Psoas muscle (tissue), 8 donors: ENCODE measurements at regions of chr16 and their contacts with region 1.

Region 1: GRCh38 chr16:11783319-11784037 is 13.6 kb downstream of the ZC3H7A start:
- DNase-seq: no peak
- ATAC-seq: peak in 3 of 4 donors; percentile 9 to 27 (median 16)
- H3K4me3 ChIP-seq: peak overlapping the region; percentile 33
- H3K27ac ChIP-seq: peak overlapping the region; percentile 74
- H3K4me1 ChIP-seq: peaks cover 44% of the 10 kb centered on the region
- H3K27me3 ChIP-seq: no peaks in the 10 kb centered on the region
- CTCF ChIP-seq: no peak

Region 2: GRCh38 chr16:11689031-11689761 is 94.3 kb before region 1 on chr16:
- intact Hi-C with region 1: no loop called
- DNase-seq: no peak
- ATAC-seq: peak in 1 of 4 donors; percentile 23
- H3K4me3 ChIP-seq: no peak overlapping the region
- H3K27ac ChIP-seq: peak overlapping the region; percentile 44
- H3K4me1 ChIP-seq: peaks cover 47% of the 10 kb centered on the region
- H3K27me3 ChIP-seq: no peaks in the 10 kb centered on the region
- CTCF ChIP-seq: no peak

Region 3: DNA sequence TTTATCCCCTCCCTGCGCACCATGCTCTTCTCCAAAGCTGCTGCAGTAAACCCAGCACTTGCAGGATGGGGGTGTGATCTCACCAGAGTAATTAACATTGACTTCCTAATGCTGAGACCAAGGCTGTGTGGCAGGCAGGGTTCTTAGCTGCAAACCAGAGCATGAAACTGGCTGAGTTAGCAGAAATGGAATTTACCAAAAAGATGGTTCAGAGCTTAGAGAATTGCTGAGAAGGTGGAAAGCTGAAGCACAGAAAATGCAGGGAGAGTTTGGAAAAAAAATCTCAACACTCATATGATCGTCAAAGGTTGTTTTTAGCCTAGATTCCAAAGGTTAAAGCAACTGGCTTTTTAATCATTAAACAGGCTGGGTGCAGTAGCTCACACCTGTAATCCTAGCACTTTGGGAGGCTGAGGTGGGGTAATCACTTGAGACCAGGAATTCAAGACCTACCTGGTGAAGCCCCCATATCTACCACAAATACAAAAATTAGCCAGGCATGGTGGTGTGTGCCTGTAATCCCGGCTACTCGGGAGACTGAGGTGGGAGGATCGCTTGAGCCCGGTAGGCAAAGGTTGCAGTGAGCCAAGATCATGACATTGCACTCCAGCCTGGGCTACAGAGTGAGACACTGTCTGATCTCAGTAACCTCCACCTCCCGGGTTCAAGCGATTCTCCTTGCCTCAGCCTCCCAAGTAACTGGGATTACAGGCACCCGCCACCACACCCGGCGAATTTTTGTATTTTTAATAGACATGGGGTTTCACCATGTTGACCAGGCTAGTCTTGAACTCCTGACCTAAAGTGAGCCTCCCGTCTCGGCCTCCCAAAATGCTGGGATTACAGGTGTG is 34.8 kb before region 1 on chr16:
- intact Hi-C with region 1: loop called in 1 of 2 experiments (anchors 5 kb)
- DNase-seq: no peak
- ATAC-seq: no peak
- H3K4me3 ChIP-seq: no peak overlapping the region
- H3K27ac ChIP-seq: no peak overlapping the region
- H3K4me1 ChIP-seq: peaks cover 1% of the 10 kb centered on the region
- H3K27me3 ChIP-seq: no peaks in the 10 kb centered on the region
- CTCF ChIP-seq: no peak

Region 4: DNA sequence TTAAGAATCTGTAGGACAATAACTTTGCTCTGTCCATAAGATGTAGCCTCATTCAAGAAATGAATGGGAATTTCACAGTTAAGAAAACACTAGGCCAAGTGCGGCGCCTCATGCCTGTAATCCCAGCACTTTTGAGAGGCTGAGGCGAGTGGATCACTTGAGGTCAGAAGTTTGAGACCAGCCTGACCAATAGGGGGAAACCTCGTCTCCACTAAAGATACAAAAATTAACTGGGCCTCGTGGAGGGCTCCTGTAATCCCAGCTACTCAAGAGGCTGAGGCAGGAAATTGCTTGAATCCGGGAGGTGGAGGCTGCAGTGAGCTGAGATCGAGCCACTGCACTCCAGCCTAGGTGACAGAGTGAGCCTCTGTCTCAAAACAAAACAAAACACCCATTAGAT is 87.7 kb after region 1 on chr16:
- intact Hi-C with region 1: no loop called
- DNase-seq: no peak
- ATAC-seq: peak in 1 of 4 donors; percentile 26
- H3K4me3 ChIP-seq: no peak overlapping the region
- H3K27ac ChIP-seq: no peak overlapping the region
- H3K4me1 ChIP-seq: peaks cover 25% of the 10 kb centered on the region
- H3K27me3 ChIP-seq: no peaks in the 10 kb centered on the region
- CTCF ChIP-seq: no peak